ENCODE measurements at regions of chr9 and their contacts with region 1.

Region 1: GRCh38 chr9:84953797-84954705 is 284.5 kb downstream of the NTRK2 start:
- DNase-seq: no peak
- H3K4me3 ChIP-seq: no peak overlapping the region
- H3K27ac ChIP-seq: no peak overlapping the region
- H3K4me1 ChIP-seq: peaks cover 4 to 8% (median 7%) of the 10 kb centered on the region in 4 donors
- H3K27me3 ChIP-seq: no peaks in the 10 kb centered on the region
- CTCF ChIP-seq: peak; percentile 79 to 96 (median 93)
- EP300 ChIP-seq: no peak
- POLR2A ChIP-seq: no peak

Region 2: GRCh38 chr9:84697509-84698114 is 256.4 kb before region 1 on chr9:
- intact Hi-C with region 1: loop called (anchors 5 kb)
- DNase-seq: no peak
- H3K4me3 ChIP-seq: no peak overlapping the region
- H3K27ac ChIP-seq: no peak overlapping the region
- H3K4me1 ChIP-seq: no peaks in the 10 kb centered on the region
- H3K27me3 ChIP-seq: no peaks in the 10 kb centered on the region
- CTCF ChIP-seq: peak; percentile 49 to 80 (median 59)
- EP300 ChIP-seq: no peak
- POLR2A ChIP-seq: no peak

Measured in esophagus muscularis mucosa (tissue), 4 donors.